ENCODE measurements at regions of chr2 and their contacts with region 1.

Region 1: GRCh38 chr2:48589170-48589767 is 28.4 kb upstream of the GTF2A1L start:
- DNase-seq: peak; percentile 22 to 51 (median 36)
- ATAC-seq: peak; percentile 74
- H3K4me3 ChIP-seq: no peak overlapping the region
- H3K27ac ChIP-seq: no peak overlapping the region
- H3K4me1 ChIP-seq: no peaks in the 10 kb centered on the region; a peak in 1 of 5 replicates
- H3K27me3 ChIP-seq: peaks cover 0 to 7% of the 10 kb centered on the region in 2 experiments; a peak in 1 of 5 replicates
- CTCF ChIP-seq: peak; percentile 71 to 83 (median 75)
- EP300 ChIP-seq: no peak
- POLR2A ChIP-seq: no peak
- RAD21 ChIP-seq: peak; percentile 64 to 74

Region 2: DNA sequence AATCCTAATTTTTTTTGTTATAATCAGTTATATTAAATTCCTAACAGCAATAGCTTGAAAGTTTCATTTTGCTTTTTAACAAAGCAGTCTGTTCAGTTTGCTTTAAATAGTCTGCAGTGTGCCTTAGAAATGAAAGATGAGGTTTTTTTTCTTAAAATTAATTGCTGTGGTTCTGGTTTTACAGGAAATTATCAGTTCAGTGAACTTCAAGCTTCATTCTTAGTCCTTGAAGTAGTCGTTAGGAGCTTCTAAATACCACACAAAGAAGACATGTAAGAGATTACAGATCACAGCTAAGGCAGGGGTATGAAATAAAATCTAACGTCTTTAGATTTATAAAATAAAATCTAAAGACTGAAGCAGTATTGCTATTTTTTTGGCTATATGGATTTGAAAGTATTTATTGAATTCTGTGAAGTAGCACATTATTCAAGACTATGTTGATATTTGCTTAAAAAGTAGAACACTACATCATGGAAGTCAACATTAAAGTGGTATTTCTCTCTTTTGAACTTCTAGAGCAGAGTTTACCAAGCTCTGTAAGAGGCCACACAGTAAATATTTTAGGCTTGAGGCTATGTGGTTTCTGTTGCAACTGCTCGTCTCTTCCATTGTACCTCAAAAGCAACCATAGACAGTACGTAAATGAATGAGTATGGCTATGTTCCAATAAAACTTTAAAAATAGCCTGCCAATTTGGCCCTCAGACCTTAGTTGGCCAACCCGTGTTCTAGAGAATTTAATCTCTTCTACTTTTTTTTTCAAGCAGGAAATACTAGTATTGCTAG is 140.8 kb before region 1 on chr2:
- CTCF ChIA-PET with region 1: no interaction called
- POLR2A ChIA-PET with region 1: no interaction called
- in situ Hi-C with region 1: no loop called
- intact Hi-C with region 1: loop called (anchors 5 kb)
- DNase-seq: no peak
- ATAC-seq: peak; percentile 32
- H3K4me3 ChIP-seq: no peak overlapping the region
- H3K27ac ChIP-seq: peak overlapping the region; percentile 46; the same call in 2 of the 3 replicates
- H3K4me1 ChIP-seq: peaks cover 0 to 36% of the 10 kb centered on the region in 2 experiments; a peak in 3 of 5 replicates
- H3K27me3 ChIP-seq: no peaks in the 10 kb centered on the region
- CTCF ChIP-seq: no peak
- EP300 ChIP-seq: no peak
- POLR2A ChIP-seq: no peak
- RAD21 ChIP-seq: no peak

Region 3: GRCh38 chr2:48545244-48545643 is 44.0 kb before region 1 on chr2:
- CTCF ChIA-PET with region 1: interaction called, 11 read pairs
- POLR2A ChIA-PET with region 1: no interaction called
- in situ Hi-C with region 1: no loop called
- intact Hi-C with region 1: loop called (anchors 1 kb)
- DNase-seq: peak; percentile 68 to 86 (median 72)
- ATAC-seq: peak; percentile 99
- H3K4me3 ChIP-seq: no peak overlapping the region
- H3K27ac ChIP-seq: no peak overlapping the region
- H3K4me1 ChIP-seq: 0 out of 5 replicates have a peak, but pooled peaks cover 0 to 4% of the 10 kb centered on the region in 2 experiments
- H3K27me3 ChIP-seq: no peaks in the 10 kb centered on the region
- CTCF ChIP-seq: peak; percentile 95 to 100 (median 99)
- EP300 ChIP-seq: no peak
- POLR2A ChIP-seq: no peak
- RAD21 ChIP-seq: peak; percentile 38 to 81

Region 4: DNA sequence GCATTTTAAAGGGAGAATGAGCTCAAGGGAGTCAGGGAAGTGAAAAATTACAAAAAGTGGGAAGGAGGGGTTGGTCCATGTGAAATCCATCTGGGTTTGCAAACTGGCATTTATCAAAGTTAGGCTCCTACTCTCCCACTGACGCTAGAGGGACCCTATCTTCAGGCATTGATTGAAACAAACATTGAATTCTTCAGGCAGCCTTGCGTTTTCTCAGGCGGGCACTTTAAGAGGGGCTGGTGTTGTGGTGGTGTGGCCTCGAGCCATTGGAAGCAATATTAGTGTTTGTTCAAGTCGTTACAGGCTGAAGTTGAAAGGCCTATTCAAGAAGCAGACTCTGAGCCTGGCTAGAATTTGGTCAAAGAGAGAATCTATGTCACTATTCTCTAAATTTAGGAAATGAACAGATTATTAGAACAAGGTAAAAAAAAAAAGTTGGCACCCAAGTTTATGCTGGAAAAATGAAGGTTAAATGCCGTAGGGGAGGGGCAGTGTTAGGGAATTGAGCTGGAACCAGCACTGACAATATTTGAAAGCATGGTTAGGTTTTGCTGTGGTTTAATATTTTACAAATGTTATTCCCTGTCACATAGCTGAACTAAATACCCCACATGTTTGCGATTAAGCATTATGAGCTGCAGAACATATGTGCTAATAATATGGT is 22.5 kb before region 1 on chr2:
- CTCF ChIA-PET with region 1: no interaction called
- POLR2A ChIA-PET with region 1: no interaction called
- in situ Hi-C with region 1: no loop called
- intact Hi-C with region 1: loop called (anchors 1 kb)
- DNase-seq: peak in 1 of 4 experiments; percentile 16
- ATAC-seq: peak; percentile 66
- H3K4me3 ChIP-seq: no peak overlapping the region
- H3K27ac ChIP-seq: no peak overlapping the region
- H3K4me1 ChIP-seq: peaks cover 0 to 4% of the 10 kb centered on the region in 2 experiments; a peak in 2 of 5 replicates
- H3K27me3 ChIP-seq: peaks cover 19 to 21% of the 10 kb centered on the region in 2 experiments
- CTCF ChIP-seq: peak; percentile 32 to 55 (median 37); a peak in 2 of 6 replicates
- EP300 ChIP-seq: no peak
- POLR2A ChIP-seq: no peak
- RAD21 ChIP-seq: no peak; a peak in 1 of 4 replicates

Region 5: GRCh38 chr2:48668992-48669391 is 79.7 kb after region 1 on chr2:
- CTCF ChIA-PET with region 1: no interaction called
- POLR2A ChIA-PET with region 1: no interaction called
- in situ Hi-C with region 1: no loop called
- intact Hi-C with region 1: no loop called
- DNase-seq: no peak
- ATAC-seq: no peak
- H3K4me3 ChIP-seq: no peak overlapping the region
- H3K27ac ChIP-seq: no peak overlapping the region
- H3K4me1 ChIP-seq: no peaks in the 10 kb centered on the region
- H3K27me3 ChIP-seq: no peaks in the 10 kb centered on the region
- CTCF ChIP-seq: no peak
- EP300 ChIP-seq: no peak
- POLR2A ChIP-seq: no peak
- RAD21 ChIP-seq: no peak

Measured in K562 (cell line).